Cardiac septum (tissue), 1 donor: ENCODE measurements at regions of chr5 and their contacts with region 1.

Region 1: GRCh38 chr5:148290271-148291195 is 21.7 kb upstream of the SPINK7 start:
- DNase-seq: no peak

Region 2: GRCh38 chr5:148443998-148444397 is 153.5 kb after region 1 on chr5:
- intact Hi-C with region 1: loop called (anchors 10 kb)
- DNase-seq: no peak

Region 3: DNA sequence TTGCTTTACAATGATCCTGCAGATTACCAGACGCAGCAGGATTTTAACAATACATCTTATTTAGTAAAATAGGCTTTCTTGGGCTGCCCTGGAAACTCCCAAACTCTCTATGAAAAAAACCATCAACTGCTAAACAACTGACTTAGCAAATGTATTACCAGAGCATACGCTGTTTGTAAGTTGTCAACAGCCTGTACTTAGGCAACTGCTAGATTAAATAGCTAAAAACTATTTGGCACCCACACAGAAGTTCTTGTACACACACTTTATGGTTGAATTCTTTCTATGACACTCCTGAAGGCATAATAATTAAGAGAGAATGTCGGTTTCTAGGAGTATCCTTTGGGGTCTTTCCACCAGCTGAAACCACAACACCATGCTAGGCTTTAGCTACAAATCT is 217.1 kb after region 1 on chr5:
- intact Hi-C with region 1: no loop called
- DNase-seq: no peak